Heart right ventricle (tissue), 16 donors: ENCODE measurements at regions of chr2 and their contacts with region 1.

Region 1: DNA sequence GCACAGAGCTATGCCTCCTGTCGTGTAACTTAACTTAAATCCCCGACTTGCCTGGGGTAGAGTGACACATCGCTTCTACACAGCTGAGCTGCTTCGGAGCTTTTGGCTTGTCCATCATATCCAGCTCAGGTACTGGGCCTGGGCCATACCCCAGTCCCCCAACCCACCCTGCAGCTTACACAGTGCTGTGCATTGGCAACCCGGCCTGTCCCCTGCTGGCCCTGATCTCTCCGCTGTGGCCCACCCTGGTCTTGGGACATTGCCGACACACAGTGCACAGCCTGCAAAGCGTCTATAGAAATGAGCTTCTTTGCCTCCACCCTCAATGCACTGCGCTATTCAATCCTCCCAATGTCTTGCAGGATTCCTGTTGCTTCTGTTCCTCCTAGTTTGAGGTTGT is 342.8 kb upstream of the RAB6C start:
- DNase-seq: no peak
- ATAC-seq: no peak
- H3K4me3 ChIP-seq: no peak overlapping the region
- H3K27ac ChIP-seq: no peak overlapping the region
- H3K4me1 ChIP-seq: no peaks in the 10 kb centered on the region
- H3K27me3 ChIP-seq: peaks cover 0 to 4% (median 0%) of the 10 kb centered on the region in 7 donors
- CTCF ChIP-seq: no peak

Region 2: DNA sequence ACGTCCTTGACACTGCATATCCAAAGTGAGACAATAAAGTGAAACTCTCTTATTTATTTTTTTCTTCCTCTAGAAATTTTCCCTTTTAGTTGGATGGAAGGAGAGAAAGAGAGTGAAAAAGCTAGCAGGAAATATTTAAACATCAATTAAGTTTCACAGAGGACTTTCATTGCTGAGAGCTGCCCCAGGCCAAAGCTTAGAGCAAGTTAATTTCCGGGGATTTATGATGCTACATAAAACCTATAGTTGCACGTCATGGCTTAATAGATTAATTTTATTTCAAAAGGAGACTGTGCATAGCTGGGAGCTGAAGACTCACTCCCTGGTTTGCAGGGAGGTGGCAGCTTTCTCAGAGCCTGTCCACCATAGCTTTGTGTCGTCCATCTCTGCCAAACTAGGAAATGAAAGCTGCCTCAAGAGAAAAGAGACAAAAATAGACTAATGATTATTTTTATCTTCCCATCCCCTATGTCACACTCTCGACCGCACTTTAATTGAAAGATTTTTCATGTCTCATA is 19.4 kb after region 1 on chr2:
- intact Hi-C with region 1: no loop called
- DNase-seq: no peak
- ATAC-seq: no peak
- H3K4me3 ChIP-seq: no peak overlapping the region
- H3K27ac ChIP-seq: no peak overlapping the region
- H3K4me1 ChIP-seq: no peaks in the 10 kb centered on the region
- H3K27me3 ChIP-seq: peaks cover 0 to 16% (median 0%) of the 10 kb centered on the region in 7 donors
- CTCF ChIP-seq: no peak

Region 3: DNA sequence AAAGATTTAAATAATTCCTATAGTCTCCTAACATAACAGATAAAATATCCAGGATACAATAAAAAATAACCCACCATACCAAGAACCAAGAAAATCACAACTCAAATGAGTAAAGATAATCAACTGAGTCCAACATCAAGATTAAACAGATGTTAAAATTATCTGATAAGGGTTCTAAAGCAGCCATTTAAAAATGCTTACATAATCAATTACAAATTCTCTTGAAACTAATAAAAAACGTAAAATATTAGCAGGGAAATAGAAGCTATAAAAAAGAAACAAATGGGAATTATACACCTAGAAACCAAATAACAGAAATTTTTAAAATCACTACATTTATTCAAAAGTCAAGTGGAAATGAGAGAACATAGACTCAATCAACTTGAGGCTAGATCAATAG is 45.1 kb after region 1 on chr2:
- intact Hi-C with region 1: loop called in 1 of 10 experiments (anchors 5 kb)
- DNase-seq: no peak
- ATAC-seq: no peak
- H3K4me3 ChIP-seq: no peak overlapping the region
- H3K27ac ChIP-seq: no peak overlapping the region
- H3K4me1 ChIP-seq: no peaks in the 10 kb centered on the region
- H3K27me3 ChIP-seq: peaks cover 0 to 12% (median 2%) of the 10 kb centered on the region in 7 donors
- CTCF ChIP-seq: no peak